Activated B cell treated with CpG ODN at 0.5 μM for 24 hours (primary cell): ENCODE measurements at regions of chr3 and their contacts with region 1.

Region 1: GRCh38 chr3:10322352-10322710 is 1.4 kb upstream of the SEC13 start:
- DNase-seq: no peak
- ATAC-seq: no peak
- H3K4me3 Mint-ChIP-seq: no peak overlapping the region
- H3K27ac Mint-ChIP-seq: no peak overlapping the region
- H3K4me1 Mint-ChIP-seq: peaks cover 31% of the 10 kb centered on the region
- H3K27me3 Mint-ChIP-seq: peaks cover 9% of the 10 kb centered on the region
- CTCF ChIP-seq: no peak

Region 2: GRCh38 chr3:8963137-8963869 is 1359.0 kb before region 1 on chr3 and contains the start of gene RAD18:
- CTCF ChIA-PET with region 1: no interaction called
- POLR2A ChIA-PET with region 1: no interaction called
- intact Hi-C with region 1: loop called (anchors 5 kb)
- DNase-seq: peak; percentile 91
- ATAC-seq: peak; percentile 96
- H3K4me3 Mint-ChIP-seq: peak within 1 kb of the TSS; percentile 95
- H3K27ac Mint-ChIP-seq: peak within 1 kb of the TSS; percentile 89
- H3K4me1 Mint-ChIP-seq: peaks cover 31% of the 10 kb centered on the region
- H3K27me3 Mint-ChIP-seq: peaks cover 5% of the 10 kb centered on the region
- CTCF ChIP-seq: no peak
- total RNA-seq, gene RAD18: 16.6 and 21.6 TPM in 2 replicates

Region 3: GRCh38 chr3:9843715-9844438 is 478.5 kb before region 1 on chr3 and contains the start of gene RPUSD3:
- CTCF ChIA-PET with region 1: no interaction called
- POLR2A ChIA-PET with region 1: interaction called, 11 read pairs
- intact Hi-C with region 1: loop called (anchors 2 kb)
- DNase-seq: peak; percentile 95
- ATAC-seq: peak; percentile 100
- H3K4me3 Mint-ChIP-seq: peak within 1 kb of the TSS; percentile 98
- H3K27ac Mint-ChIP-seq: peak within 1 kb of the TSS; percentile 86
- H3K4me1 Mint-ChIP-seq: peaks cover 20% of the 10 kb centered on the region
- H3K27me3 Mint-ChIP-seq: no peaks in the 10 kb centered on the region
- CTCF ChIP-seq: no peak
- total RNA-seq, gene RPUSD3: 49.5 and 55.7 TPM in 2 replicates

Region 4: GRCh38 chr3:9986237-9986725 is 336.1 kb before region 1 on chr3:
- CTCF ChIA-PET with region 1: no interaction called
- POLR2A ChIA-PET with region 1: interaction called, 14 read pairs
- intact Hi-C with region 1: loop called (anchors 1 kb)
- DNase-seq: no peak
- ATAC-seq: peak; percentile 28
- H3K4me3 Mint-ChIP-seq: peak overlapping the region; percentile 98
- H3K27ac Mint-ChIP-seq: peak overlapping the region; percentile 100
- H3K4me1 Mint-ChIP-seq: peaks cover 24% of the 10 kb centered on the region
- H3K27me3 Mint-ChIP-seq: no peaks in the 10 kb centered on the region
- CTCF ChIP-seq: no peak

Region 5: GRCh38 chr3:10255835-10256234 is 66.5 kb before region 1 on chr3:
- CTCF ChIA-PET with region 1: no interaction called
- POLR2A ChIA-PET with region 1: no interaction called
- intact Hi-C with region 1: no loop called
- DNase-seq: no peak
- ATAC-seq: no peak
- H3K4me3 Mint-ChIP-seq: no peak overlapping the region
- H3K27ac Mint-ChIP-seq: no peak overlapping the region
- H3K4me1 Mint-ChIP-seq: peaks cover 32% of the 10 kb centered on the region
- H3K27me3 Mint-ChIP-seq: no peaks in the 10 kb centered on the region
- CTCF ChIP-seq: no peak

Region 6: GRCh38 chr3:10389995-10390394 is 67.7 kb after region 1 on chr3:
- CTCF ChIA-PET with region 1: no interaction called
- POLR2A ChIA-PET with region 1: interaction called, 4 read pairs
- intact Hi-C with region 1: loop called (anchors 1 kb)
- DNase-seq: no peak
- ATAC-seq: peak; percentile 91
- H3K4me3 Mint-ChIP-seq: peak overlapping the region; percentile 60
- H3K27ac Mint-ChIP-seq: peak overlapping the region; percentile 92
- H3K4me1 Mint-ChIP-seq: peaks cover 94% of the 10 kb centered on the region
- H3K27me3 Mint-ChIP-seq: no peaks in the 10 kb centered on the region
- CTCF ChIP-seq: no peak